AG04449 (cell line): ENCODE measurements at regions of chr7 and their contacts with region 1.

Region 1: GRCh38 chr7:130010689-130011412 is 40.3 kb downstream of the ZC3HC1 start:
- DNase-seq: peak; percentile 45
- H3K4me3 ChIP-seq: no peak overlapping the region; the same call in 1 of the 2 replicates
- CTCF ChIP-seq: peak; percentile 82

Region 2: GRCh38 chr7:129611246-129612111 is 399.4 kb before region 1 on chr7 and contains the start of gene NRF1:
- CTCF ChIA-PET with region 1: interaction called, 10 read pairs
- POLR2A ChIA-PET with region 1: no interaction called
- DNase-seq: peak; percentile 19
- H3K4me3 ChIP-seq: peak within 1 kb of the TSS; percentile 81
- CTCF ChIP-seq: peak; percentile 43

Region 3: GRCh38 chr7:129657363-129657762 is 353.5 kb before region 1 on chr7:
- CTCF ChIA-PET with region 1: interaction called, 21 read pairs
- POLR2A ChIA-PET with region 1: no interaction called
- DNase-seq: no peak
- H3K4me3 ChIP-seq: no peak overlapping the region
- CTCF ChIP-seq: no peak

Region 4: DNA sequence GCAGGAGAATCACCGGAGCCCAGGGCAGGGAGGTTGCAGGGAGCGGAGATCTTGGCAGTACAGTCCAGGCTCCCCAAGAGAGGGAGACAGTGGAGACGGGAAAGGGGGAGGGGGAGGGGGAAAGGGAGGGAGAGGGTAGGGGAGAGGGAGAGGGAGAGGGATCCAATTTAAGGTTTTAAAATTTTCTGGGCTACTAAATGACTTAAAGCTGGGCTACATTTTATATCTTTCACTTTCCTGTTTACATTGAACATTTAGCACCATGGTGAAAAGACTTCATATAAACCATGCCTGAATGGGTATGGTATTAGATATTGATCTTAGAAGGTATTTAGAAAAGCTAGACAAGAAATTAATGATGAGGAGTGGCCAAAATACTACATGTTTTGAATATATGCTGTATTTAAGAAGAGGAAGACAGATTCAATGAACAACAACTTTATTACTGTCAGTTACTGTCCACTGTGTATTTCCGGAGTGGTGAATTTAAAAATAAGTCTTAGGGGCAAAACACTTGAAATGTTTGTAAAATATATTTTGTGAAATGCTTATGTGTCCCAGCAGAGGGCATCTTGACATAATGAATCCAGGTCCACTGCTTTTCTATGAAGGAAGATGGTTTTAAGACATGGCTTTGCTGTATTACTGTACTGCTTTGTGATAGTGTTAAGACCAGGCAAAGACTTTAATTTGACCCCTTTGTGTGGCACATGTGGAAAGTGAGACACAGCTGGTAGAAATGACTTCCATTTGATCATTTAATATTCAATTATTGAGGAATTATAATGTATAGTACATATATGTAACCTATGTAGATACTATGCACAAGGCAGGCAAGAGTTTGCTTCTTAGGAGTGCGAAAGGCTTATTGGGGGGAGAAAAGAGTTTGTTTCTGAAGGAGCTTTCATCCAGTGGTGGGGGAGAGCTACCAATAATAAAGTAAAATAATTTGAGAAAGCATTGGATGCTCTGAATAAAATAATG is 346.5 kb before region 1 on chr7:
- CTCF ChIA-PET with region 1: interaction called, 88 read pairs
- POLR2A ChIA-PET with region 1: interaction called, 4 read pairs
- DNase-seq: peak; percentile 36
- H3K4me3 ChIP-seq: no peak overlapping the region
- CTCF ChIP-seq: peak; percentile 46

Region 5: GRCh38 chr7:129952653-129953560 is 57.9 kb before region 1 on chr7 and contains the start of gene UBE2H:
- CTCF ChIA-PET with region 1: interaction called, 13 read pairs
- POLR2A ChIA-PET with region 1: no interaction called
- DNase-seq: peak; percentile 37
- H3K4me3 ChIP-seq: peak within 1 kb of the TSS; percentile 91
- CTCF ChIP-seq: no peak

Region 6: GRCh38 chr7:130024390-130024789 is 13.5 kb after region 1 on chr7:
- CTCF ChIA-PET with region 1: interaction called, 11 read pairs
- POLR2A ChIA-PET with region 1: no interaction called
- DNase-seq: peak; percentile 31
- H3K4me3 ChIP-seq: no peak overlapping the region
- CTCF ChIP-seq: no peak